Right ventricle myocardium superior (tissue), 1 donor: ENCODE measurements at regions of chr17 and their contacts with region 1.

Region 1: DNA sequence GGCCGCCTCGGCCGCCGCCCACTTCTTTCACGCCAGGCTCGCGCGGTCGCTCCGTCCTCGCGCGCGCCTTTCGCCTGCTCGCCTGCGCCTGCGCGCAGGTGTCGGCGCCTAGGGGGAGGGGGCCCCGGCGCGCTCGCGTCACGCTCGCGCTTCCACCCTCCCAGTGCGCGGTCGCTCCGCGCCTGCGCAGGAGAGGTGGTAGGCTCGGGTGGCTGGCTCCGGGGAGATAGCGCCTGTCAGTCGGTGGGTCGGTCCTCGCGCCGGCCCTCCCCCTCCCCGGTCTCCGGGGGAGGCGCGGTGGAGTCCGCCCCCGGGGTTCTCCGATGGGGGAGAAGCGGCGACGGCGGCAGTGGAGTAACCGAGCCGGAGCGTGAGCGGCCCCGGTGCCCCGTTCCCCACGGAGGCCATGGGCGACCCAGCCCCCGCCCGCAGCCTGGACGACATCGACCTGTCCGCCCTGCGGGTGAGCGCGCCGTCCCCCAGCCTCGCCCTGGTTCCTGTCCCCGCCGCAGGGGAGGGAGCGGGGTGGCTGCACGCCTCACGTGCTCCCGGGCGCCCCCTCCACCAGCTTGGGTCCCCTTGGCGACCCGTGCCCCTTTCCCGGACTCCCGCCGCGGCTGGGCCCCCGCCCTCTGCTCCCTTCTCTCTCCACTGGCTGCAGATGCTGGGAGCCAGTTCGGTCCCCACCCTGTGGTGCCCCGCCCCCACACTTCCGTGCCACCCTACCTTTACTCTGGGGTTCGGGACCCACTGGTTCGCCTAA is at the start of gene MINK1:
- DNase-seq: peak; percentile 93
- ATAC-seq: peak; percentile 97
- total RNA-seq, gene MINK1: 47.6 TPM

Region 2: DNA sequence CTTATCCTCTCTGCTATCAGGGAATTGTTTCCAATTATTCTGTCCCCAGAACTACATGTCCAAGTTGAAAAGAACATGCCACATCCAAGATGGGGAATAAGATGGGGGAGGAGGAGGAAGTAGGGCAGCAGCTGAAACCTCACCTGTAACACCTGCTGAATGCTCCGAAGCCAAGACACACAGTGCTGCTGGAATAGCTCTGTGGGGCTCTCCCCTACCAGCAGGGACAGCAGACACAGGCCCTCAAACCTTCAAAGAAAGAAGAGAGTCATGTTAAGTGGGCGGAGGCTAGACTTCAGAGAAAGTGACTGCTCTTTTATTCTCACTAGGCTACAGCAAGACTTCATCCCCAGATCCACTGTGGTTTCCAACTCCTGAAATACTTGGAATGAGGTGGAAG is 142.6 kb before region 1 on chr17:
- intact Hi-C with region 1: no loop called
- DNase-seq: no peak
- ATAC-seq: no peak

Region 3: DNA sequence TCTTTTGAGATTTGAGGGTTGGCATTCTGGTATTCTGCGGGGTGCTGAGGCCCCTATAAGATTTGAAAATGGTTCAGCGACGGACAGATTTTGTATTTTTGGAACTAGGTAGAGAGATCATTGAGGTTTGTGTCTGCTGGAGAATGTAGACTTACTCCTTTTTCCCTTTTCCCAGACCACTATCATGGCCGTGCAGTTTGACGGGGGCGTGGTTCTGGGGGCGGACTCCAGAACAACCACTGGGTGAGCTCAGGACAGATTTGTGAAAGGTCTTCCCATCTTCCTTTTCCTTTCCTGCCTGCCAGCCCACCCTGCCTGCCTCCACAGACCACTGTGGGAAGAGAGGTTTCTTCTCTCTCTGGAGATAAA is 36.8 kb before region 1 on chr17:
- intact Hi-C with region 1: loop called (anchors 5 kb)
- DNase-seq: no peak
- ATAC-seq: peak; percentile 21

Region 4: GRCh38 chr17:4997302-4998026 is 164.1 kb after region 1 on chr17 and contains the starts of genes INCA1 and KIF1C:
- intact Hi-C with region 1: no loop called
- DNase-seq: peak; percentile 97
- ATAC-seq: peak; percentile 92
- total RNA-seq, gene INCA1: 2.8 TPM
- total RNA-seq, gene KIF1C: 720 TPM